Activated T-helper 1 cell treated with anti-CD3 and anti-CD28 coated beads, Interleukin-12 subunit alpha, Interleukin-12 subunit beta, Interleukin-2, Interleukin-4 antibody, amounts not matched to agents 30 ng/mL and 10 ng/mL and 1 ng/mL, durations not matched to agents 14 hours and 24 hours and 36 hours (primary cell): ENCODE measurements at regions of chr6 and their contacts with region 1.

Region 1: DNA sequence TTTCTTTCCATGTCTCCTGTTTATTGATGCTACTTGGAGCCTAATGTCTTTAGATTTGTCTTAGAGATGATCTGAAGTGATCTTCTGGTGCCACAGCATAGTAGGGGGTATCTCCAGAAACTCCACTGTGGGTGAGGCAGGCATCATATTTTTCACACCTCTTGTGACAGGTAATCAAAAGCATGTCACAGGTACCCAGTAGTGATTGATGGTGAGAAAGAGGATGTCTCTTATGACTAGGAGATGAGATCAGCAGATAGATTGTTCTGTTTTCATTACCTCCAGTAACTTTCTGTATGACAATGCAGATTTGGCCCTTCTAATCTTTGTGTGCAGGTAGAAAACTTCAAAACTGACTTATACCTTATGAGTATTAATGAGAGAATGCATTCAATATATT is 13.5 kb downstream of the NCOA7 start:
- DNase-seq: peak; percentile 14
- H3K4me3 Mint-ChIP-seq: peak overlapping the region; percentile 16
- H3K27ac Mint-ChIP-seq: peak overlapping the region; percentile 66
- H3K4me1 Mint-ChIP-seq: peaks cover 76% of the 10 kb centered on the region
- H3K27me3 Mint-ChIP-seq: no peaks in the 10 kb centered on the region

Region 2: GRCh38 chr6:125814481-125814880 is 10.2 kb after region 1 on chr6:
- intact Hi-C with region 1: loop called (anchors 1 kb)
- DNase-seq: no peak
- H3K4me3 Mint-ChIP-seq: no peak overlapping the region
- H3K27ac Mint-ChIP-seq: peak overlapping the region; percentile 47
- H3K4me1 Mint-ChIP-seq: peaks cover 67% of the 10 kb centered on the region
- H3K27me3 Mint-ChIP-seq: no peaks in the 10 kb centered on the region

Region 3: GRCh38 chr6:125829433-125829832 is 25.2 kb after region 1 on chr6:
- intact Hi-C with region 1: loop called (anchors 1 kb)
- DNase-seq: peak; percentile 19
- H3K4me3 Mint-ChIP-seq: no peak overlapping the region
- H3K27ac Mint-ChIP-seq: peak overlapping the region; percentile 42
- H3K4me1 Mint-ChIP-seq: peaks cover 62% of the 10 kb centered on the region
- H3K27me3 Mint-ChIP-seq: no peaks in the 10 kb centered on the region

Region 4: DNA sequence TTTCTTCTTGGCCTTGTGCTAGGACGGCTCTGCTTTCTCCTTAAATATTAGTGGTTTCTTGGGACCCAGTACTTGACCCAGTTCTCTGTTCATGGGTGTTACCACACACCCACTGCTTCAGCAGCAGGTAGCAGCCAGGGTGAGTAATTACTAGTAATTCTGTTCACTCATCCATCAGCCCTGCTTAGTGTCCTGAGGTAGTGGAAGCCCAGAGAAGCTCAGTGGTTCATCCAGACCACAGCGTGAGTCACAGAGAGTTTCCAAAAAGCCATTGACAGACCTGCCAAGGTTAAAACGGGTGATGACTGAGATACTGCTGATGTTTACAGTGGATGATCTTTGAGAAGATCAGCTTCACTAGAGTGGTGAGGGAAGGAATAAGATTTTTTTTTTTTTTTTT is 100.6 kb after region 1 on chr6:
- intact Hi-C with region 1: loop called (anchors 1 kb)
- DNase-seq: peak; percentile 42
- H3K4me3 Mint-ChIP-seq: peak overlapping the region; percentile 60
- H3K27ac Mint-ChIP-seq: peak overlapping the region; percentile 93
- H3K4me1 Mint-ChIP-seq: peaks cover 63% of the 10 kb centered on the region
- H3K27me3 Mint-ChIP-seq: no peaks in the 10 kb centered on the region

Region 5: DNA sequence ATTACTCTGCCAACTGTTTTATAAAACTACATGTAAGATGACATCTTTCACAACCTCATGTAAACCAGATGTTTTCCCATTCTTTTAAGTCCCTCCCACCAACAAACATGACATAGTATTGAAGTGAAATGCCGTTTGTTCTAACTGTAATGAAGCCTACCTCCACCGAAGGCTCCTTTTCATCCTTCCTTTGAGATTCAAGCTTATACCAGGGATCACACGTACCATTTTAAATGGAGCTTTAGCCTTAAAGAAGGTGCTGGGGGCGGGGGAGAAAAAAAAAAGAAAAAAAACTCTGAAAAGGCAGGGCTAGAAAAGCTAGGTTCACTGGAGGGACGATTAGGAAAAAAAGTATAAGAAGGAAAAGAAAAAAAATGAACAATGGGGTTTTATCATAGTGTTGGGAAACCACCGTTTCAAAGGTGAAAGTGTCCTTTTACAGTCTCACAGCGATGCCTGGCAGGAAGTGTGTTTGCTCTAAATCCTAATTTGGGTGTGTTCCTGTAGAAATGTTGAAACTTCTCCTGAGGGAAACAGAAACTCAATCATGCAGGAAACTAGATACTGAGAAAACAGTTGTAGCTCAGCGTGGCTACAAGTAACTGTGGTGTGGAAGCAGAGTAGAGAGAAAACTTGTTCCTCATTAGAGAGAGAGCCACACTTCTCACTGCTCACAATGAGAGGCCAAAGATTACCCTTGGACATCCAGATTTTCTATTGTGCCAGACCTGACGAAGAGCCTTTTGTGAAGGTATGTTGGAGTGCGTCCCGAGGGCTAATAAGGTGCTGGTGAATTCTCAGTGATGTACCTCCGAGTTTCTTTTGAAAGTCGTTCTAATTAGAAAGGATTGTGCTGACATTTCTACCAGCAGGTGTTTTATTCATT is 114.7 kb after region 1 on chr6:
- intact Hi-C with region 1: loop called (anchors 1 kb)
- DNase-seq: peak; percentile 66
- H3K4me3 Mint-ChIP-seq: peak overlapping the region; percentile 88
- H3K27ac Mint-ChIP-seq: peak overlapping the region; percentile 94
- H3K4me1 Mint-ChIP-seq: peaks cover 58% of the 10 kb centered on the region
- H3K27me3 Mint-ChIP-seq: no peaks in the 10 kb centered on the region

Region 6: DNA sequence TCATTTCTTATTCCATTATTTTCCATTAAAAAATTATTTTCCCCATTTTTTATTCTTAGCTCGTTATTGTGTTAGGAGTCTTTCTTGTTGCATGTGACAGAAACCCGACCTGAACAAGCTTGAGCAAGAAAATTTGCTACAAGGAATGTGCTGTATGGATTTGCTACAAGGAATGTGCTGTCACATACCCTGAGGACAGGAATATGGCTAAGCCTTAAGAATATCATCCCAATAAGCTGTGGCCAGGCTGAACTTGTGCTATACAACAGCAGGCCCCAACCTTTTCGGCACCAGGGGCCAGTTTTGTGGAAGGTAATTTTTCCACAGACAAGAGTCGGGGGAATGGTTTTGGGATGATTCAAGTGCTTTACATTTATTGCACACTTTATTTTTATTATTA is 296.1 kb after region 1 on chr6:
- intact Hi-C with region 1: no loop called
- DNase-seq: no peak
- H3K4me3 Mint-ChIP-seq: no peak overlapping the region
- H3K27ac Mint-ChIP-seq: no peak overlapping the region
- H3K4me1 Mint-ChIP-seq: no peaks in the 10 kb centered on the region
- H3K27me3 Mint-ChIP-seq: no peaks in the 10 kb centered on the region

Region 7: GRCh38 chr6:126268092-126268491 is 463.8 kb after region 1 on chr6:
- intact Hi-C with region 1: no loop called
- DNase-seq: no peak
- H3K4me3 Mint-ChIP-seq: no peak overlapping the region
- H3K27ac Mint-ChIP-seq: no peak overlapping the region
- H3K4me1 Mint-ChIP-seq: no peaks in the 10 kb centered on the region
- H3K27me3 Mint-ChIP-seq: no peaks in the 10 kb centered on the region

Region 8: GRCh38 chr6:127291495-127291894 is 1487.2 kb after region 1 on chr6:
- intact Hi-C with region 1: loop called (anchors 10 kb)
- DNase-seq: no peak
- H3K4me3 Mint-ChIP-seq: peak overlapping the region; percentile 8
- H3K27ac Mint-ChIP-seq: peak overlapping the region; percentile 77
- H3K4me1 Mint-ChIP-seq: peaks cover 32% of the 10 kb centered on the region
- H3K27me3 Mint-ChIP-seq: no peaks in the 10 kb centered on the region